Activated T-helper 1 cell treated with anti-CD3 and anti-CD28 coated beads, Interleukin-12 subunit alpha, Interleukin-12 subunit beta, Interleukin-2, Interleukin-4 antibody, amounts not matched to agents 30 ng/mL and 10 ng/mL and 1 ng/mL, durations not matched to agents 14 hours and 24 hours and 36 hours (primary cell): ENCODE measurements at regions of chr16 and their contacts with region 1.

Region 1: DNA sequence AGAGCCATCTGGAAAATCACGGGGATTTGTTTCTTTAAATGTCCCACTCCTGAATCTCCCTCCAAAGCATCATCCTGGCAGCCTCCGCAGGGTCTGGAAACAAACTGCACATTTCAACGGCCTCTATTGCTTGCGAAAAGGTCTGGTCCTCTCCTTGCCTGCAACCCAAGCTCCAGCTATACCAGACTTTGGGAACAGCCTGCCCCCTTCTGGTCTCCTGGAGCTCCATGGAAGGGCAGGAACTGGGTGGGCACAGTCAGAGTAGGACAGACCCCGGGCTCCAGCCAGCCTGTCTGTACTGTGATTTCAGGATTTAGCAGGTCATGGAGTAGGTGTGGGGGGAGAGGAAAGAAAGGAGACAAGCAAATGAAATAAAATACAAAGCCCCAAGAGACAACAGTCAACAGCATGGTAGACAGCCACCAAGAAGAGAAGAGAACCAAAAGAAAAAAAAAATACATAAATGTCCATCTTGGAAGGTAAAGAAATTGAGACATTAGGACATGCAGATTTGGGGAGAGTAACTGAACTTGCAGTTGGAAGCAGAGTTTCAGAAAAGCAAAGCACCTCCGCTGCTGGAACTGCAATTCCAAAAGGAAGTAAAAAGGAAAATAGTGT is 2.7 kb downstream of the XYLT1 start:
- DNase-seq: no peak
- H3K4me3 Mint-ChIP-seq: peak overlapping the region; percentile 93
- H3K27ac Mint-ChIP-seq: peak overlapping the region; percentile 4
- H3K4me1 Mint-ChIP-seq: peaks cover 59% of the 10 kb centered on the region
- H3K27me3 Mint-ChIP-seq: no peaks in the 10 kb centered on the region

Region 2: DNA sequence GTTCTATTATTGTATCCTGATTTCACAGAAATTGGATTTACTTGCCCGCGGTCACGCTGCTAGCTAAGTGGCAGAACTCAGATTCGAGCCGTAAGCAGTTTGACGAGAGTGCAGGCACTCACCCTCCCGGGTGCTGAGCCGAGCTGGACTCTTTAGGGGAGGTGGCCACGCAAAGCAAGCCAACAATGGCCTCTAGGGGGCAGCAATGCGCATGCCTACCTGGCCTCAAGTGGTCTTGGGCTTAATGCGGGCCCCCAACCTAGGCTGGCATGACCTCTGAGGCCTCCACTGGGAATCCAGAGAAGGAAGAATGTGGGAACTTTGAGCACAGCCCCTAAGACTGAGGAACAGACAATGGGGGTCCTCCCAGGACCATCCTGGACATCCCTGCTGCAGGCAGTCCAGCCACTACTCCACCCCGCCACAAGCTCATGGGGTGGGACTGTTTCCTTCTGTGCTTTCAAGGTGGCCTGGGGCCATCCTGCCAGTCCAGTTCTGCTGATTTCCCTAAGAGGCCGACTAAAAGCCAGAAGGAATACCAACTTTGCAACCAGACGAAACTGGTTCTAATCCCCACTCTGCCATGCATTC is 273.7 kb before region 1 on chr16:
- intact Hi-C with region 1: loop called (anchors 1 kb)
- DNase-seq: peak; percentile 18
- H3K4me3 Mint-ChIP-seq: no peak overlapping the region
- H3K27ac Mint-ChIP-seq: no peak overlapping the region
- H3K4me1 Mint-ChIP-seq: peaks cover 4% of the 10 kb centered on the region
- H3K27me3 Mint-ChIP-seq: no peaks in the 10 kb centered on the region

Region 3: DNA sequence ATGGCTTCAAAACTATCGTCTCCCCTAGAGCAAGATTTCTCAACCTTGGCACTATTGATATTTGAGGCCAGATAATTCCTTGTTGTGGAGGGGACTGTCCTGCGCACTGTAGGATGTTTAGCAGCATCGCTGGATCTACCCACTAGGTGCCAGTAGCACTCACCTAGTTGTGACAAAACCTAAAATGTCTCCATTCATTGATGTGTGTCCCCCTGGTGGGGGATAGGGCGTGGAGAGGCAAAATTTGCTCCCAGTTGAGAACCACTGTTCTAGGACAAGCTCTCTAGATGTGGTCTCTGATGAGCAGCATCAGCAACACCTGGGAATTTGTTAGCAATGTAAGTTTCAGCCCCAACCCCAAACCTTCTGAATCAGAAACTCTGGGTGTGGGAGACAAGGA is 256.2 kb before region 1 on chr16:
- intact Hi-C with region 1: loop called (anchors 5 kb)
- DNase-seq: no peak
- H3K4me3 Mint-ChIP-seq: no peak overlapping the region
- H3K27ac Mint-ChIP-seq: no peak overlapping the region
- H3K4me1 Mint-ChIP-seq: peaks cover 23% of the 10 kb centered on the region
- H3K27me3 Mint-ChIP-seq: no peaks in the 10 kb centered on the region

Region 4: DNA sequence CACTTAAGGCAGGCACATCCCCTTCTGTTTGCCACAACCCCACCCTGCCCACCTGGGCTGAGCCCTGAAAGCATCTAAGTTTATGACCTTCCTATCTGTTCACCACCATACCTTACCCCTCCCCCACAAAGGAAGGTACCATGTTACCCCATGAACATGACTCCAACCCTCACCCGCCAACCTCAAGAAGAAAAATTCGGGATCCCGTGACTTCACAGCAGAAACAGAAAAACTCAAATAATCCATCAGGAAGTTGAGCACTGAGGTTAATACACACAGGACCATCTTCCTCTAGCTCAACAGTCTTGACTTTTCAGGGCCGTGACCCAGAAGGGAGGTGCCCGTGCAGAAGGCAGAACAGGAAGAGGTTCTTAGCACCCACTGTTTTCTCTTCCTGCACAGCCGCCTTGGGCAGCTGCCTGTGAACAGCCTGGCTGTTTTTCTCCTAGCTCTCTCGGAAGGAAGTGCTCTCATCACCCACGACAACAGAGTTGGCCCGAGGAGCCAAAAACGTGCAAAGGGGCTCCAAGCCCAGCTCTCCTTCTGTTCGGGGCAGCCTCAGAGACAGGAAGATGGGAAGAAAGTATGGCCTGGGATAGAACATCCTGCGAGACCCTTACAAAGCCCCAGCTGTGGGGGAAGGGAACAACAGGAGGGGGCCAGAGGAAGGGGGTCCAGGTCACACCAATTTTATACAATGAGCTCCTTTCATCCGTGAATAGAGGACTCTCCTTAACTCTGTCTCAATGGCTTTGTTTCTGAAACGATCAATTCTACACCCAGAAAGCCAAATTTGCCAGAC is 98.4 kb before region 1 on chr16:
- intact Hi-C with region 1: loop called (anchors 2 kb)
- DNase-seq: peak; percentile 72
- H3K4me3 Mint-ChIP-seq: peak overlapping the region; percentile 83
- H3K27ac Mint-ChIP-seq: peak overlapping the region; percentile 93
- H3K4me1 Mint-ChIP-seq: peaks cover 88% of the 10 kb centered on the region
- H3K27me3 Mint-ChIP-seq: no peaks in the 10 kb centered on the region

Region 5: DNA sequence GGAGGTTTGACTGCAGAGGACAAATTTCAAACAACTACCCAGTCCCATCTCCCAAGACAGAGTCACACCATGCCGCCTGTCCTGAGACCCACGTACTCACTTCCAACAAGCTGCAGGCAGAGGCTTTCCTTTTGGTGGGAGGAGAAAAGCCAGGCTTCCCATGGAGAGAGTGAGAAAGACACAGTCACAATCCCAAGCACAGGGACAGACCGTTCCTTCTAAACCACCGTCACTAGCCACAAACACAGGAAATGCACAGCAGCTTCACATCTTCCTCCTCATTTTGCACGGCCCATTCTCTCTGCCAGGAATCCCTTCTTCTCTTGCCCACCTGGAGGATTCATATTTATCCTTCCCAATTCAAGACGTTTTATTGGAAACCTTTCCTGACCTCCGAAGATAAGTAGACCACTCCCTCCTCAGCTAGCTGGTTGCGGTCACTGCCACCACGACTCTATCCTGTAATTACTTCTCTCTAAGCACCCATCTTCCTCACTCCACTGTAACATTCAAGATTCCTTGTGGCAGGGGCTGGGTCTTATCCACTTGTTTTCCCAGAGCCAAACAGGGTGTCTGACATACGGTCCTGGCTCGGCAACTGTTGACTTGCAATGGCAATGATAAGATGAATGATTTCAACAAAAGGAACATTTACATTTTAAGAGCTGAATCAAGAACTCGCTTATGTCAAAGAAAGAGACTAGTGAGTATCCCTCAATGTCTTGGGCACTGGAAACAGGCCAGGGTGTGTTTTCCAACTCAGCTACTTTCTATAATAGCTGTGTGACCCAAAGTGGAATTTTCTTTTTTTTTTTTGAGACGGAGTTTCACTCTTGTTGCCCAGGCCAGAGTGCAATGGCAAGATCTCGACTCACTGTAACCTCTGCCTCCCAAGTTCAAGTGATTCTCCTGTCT is 84.8 kb before region 1 on chr16:
- intact Hi-C with region 1: no loop called
- DNase-seq: no peak
- H3K4me3 Mint-ChIP-seq: peak overlapping the region; percentile 41
- H3K27ac Mint-ChIP-seq: peak overlapping the region; percentile 50
- H3K4me1 Mint-ChIP-seq: peaks cover 50% of the 10 kb centered on the region
- H3K27me3 Mint-ChIP-seq: peaks cover 3% of the 10 kb centered on the region

Region 6: GRCh38 chr16:17416461-17417311 is 51.3 kb before region 1 on chr16:
- intact Hi-C with region 1: loop called (anchors 2 kb)
- DNase-seq: peak; percentile 40
- H3K4me3 Mint-ChIP-seq: peak overlapping the region; percentile 82
- H3K27ac Mint-ChIP-seq: peak overlapping the region; percentile 97
- H3K4me1 Mint-ChIP-seq: peaks cover 46% of the 10 kb centered on the region
- H3K27me3 Mint-ChIP-seq: no peaks in the 10 kb centered on the region